Right cardiac atrium (tissue), 5 donors: ENCODE measurements at regions of chr2 and their contacts with region 1.

Region 1: DNA sequence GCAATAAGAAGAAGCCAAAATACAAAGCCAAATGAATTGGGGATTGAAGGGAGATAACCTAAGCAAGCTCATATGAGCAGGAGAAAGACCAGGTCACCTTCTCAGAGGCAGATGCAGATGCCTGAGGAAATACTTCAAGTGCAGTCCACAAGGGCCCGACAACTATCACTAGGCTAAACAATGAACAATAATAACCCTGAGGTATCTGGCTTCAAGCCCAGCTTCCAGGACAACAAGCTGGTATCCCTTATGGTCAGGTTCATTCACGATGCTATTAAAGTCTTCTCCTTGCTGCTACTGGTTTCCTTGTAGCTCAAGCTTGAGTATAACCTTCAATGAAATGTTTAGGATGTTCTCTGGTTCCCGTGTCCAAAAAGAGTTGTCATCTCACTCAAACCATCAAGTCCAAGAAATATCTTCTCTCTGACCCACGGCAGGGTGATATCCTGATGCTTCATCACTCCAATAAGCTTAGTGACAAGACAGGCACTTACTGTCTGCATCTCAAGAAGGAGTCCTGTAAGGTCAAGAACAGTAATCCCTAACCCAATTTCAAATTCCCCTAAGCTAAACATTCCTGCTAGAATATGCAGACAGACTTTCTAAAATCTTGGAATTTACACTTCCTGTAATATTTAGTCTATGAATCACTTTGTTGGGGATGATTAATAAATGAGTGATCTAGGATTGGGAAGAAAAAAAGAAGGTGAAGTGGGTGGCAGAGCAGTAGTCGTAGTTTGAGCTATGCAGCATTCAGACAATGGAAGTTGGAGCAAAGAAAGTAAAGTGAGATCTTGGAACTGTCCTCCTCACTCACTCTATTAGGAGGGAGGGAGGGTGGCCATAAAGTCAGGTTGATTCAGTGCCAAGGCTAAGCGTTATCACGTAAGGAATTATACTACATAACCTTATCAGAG is 33.1 kb downstream of the CHN1 start:
- DNase-seq: no peak
- ATAC-seq: peak; percentile 69 to 71
- H3K4me3 ChIP-seq: no peak overlapping the region
- H3K27ac ChIP-seq: no peak overlapping the region
- H3K4me1 ChIP-seq: peaks cover 2% of the 10 kb centered on the region
- H3K27me3 ChIP-seq: no peaks in the 10 kb centered on the region

Region 2: GRCh38 chr2:174901075-174901474 is 71.0 kb before region 1 on chr2:
- intact Hi-C with region 1: loop called in 1 of 4 experiments (anchors 10 kb)
- DNase-seq: peak in 1 of 3 donors; percentile 50
- ATAC-seq: peak; percentile 43 to 59
- H3K4me3 ChIP-seq: no peak overlapping the region
- H3K27ac ChIP-seq: no peak overlapping the region
- H3K4me1 ChIP-seq: no peaks in the 10 kb centered on the region
- H3K27me3 ChIP-seq: no peaks in the 10 kb centered on the region

Region 3: GRCh38 chr2:175025946-175026345 is 53.8 kb after region 1 on chr2:
- intact Hi-C with region 1: no loop called
- DNase-seq: no peak
- ATAC-seq: no peak
- H3K4me3 ChIP-seq: no peak overlapping the region
- H3K27ac ChIP-seq: no peak overlapping the region
- H3K4me1 ChIP-seq: no peaks in the 10 kb centered on the region
- H3K27me3 ChIP-seq: no peaks in the 10 kb centered on the region

Region 4: DNA sequence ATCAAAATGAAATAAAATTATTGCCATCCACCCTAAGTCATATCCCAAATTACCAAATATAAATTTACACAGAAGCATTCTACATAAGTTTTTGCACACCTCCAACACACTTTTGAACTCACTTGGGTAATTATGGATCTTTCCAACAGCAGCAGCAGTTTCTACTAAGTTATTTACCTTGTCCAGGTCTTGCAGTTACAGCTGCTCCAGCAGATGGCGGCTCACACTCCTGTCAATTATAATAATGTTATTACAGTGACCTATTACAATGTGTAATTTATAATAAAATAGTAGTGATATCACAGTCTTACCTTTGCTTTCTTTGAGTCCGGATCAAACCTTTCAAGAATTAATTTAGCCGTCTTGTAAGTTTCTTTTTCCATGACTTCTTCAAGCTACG is 992.1 kb after region 1 on chr2:
- intact Hi-C with region 1: no loop called
- DNase-seq: no peak
- ATAC-seq: no peak
- H3K4me3 ChIP-seq: no peak overlapping the region
- H3K27ac ChIP-seq: no peak overlapping the region
- H3K4me1 ChIP-seq: no peaks in the 10 kb centered on the region
- H3K27me3 ChIP-seq: no peaks in the 10 kb centered on the region